ENCODE measurements at regions of chr3 and their contacts with region 1.

Region 1: DNA sequence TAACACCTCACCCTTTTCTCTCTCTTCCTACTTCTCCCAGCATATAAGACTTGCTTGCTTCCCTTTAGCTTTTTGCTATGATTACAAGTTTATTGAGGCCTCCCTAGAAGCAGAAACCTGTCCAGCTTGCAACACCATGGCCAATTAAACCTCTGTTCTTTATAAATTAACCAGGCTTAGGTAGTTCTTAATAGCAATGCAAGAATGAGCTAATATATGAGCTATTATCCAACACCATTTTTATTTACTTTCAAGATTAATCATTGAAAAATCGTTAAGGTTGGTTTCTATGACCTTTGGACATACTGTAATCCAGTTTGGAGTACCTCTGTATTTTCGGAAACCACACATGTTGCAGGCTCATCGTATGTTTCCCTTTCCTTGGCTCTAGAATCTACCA is 643.1 kb downstream of the ZPLD1 start:
- DNase-seq: no peak
- ATAC-seq: no peak
- H3K4me3 ChIP-seq: no peak overlapping the region
- H3K27ac ChIP-seq: no peak overlapping the region
- H3K4me1 ChIP-seq: no peaks in the 10 kb centered on the region
- H3K27me3 ChIP-seq: no peaks in the 10 kb centered on the region
- CTCF ChIP-seq: no peak
- EP300 ChIP-seq: no peak
- POLR2A ChIP-seq: no peak
- RAD21 ChIP-seq: no peak

Region 2: DNA sequence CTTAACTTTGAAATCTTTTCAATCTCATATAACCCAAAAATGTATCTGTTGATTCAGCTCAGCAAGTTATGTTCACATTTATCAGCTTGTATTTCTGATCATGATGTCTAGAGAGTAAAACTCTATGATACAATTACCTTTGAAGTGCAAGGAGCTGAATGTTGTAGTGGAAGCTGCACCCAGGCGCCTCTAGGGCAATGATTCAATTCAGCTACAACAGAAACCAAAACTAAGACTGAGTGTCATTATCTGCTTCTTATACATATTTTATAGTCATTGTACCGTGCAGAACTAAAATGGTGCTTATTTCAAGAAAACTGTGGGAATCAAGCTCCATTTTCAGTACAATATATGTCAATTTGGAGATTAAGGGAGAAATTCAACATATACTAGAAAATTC is 594.4 kb after region 1 on chr3:
- CTCF ChIA-PET with region 1: no interaction called
- POLR2A ChIA-PET with region 1: no interaction called
- in situ Hi-C with region 1: no loop called
- intact Hi-C with region 1: loop called (anchors 5 kb)
- DNase-seq: no peak
- ATAC-seq: no peak
- H3K4me3 ChIP-seq: no peak overlapping the region
- H3K27ac ChIP-seq: no peak overlapping the region
- H3K4me1 ChIP-seq: no peaks in the 10 kb centered on the region
- H3K27me3 ChIP-seq: no peaks in the 10 kb centered on the region
- CTCF ChIP-seq: no peak
- EP300 ChIP-seq: no peak
- POLR2A ChIP-seq: no peak
- RAD21 ChIP-seq: no peak

Measured in HepG2 (cell line).